Tibial artery (tissue), 4 donors: ENCODE measurements at regions of chr10 and their contacts with region 1.

Region 1: DNA sequence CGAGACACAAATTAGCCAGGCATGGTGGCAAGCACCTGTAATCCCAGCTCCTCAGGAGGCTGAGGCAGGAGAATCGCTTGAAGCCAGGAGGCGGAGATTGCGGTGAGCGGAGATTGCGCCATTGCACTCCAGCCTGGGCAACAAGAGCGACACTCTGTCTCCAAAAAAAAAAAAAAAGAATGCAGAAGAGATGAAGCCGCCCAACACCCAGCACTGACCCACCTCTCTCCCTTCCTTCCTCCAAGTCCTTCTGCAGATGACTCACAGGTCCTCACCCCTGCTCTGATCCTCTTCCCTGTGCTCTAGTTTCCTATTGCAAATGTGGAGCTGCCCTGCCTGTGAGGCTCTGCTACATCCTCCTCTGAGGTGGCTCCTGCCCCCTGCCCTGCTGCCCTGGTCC is 22.0 kb upstream of the OPALIN start:
- DNase-seq: no peak
- H3K4me3 ChIP-seq: no peak overlapping the region
- H3K27ac ChIP-seq: no peak overlapping the region
- H3K4me1 ChIP-seq: no peaks in the 10 kb centered on the region
- H3K27me3 ChIP-seq: peaks cover 0 to 40% of the 10 kb centered on the region in 2 donors
- CTCF ChIP-seq: no peak

Region 2: GRCh38 chr10:96541921-96542320 is 161.1 kb after region 1 on chr10:
- intact Hi-C with region 1: no loop called
- DNase-seq: no peak
- H3K4me3 ChIP-seq: no peak overlapping the region
- H3K27ac ChIP-seq: no peak overlapping the region
- H3K4me1 ChIP-seq: no peaks in the 10 kb centered on the region
- H3K27me3 ChIP-seq: no peaks in the 10 kb centered on the region
- CTCF ChIP-seq: no peak

Region 3: DNA sequence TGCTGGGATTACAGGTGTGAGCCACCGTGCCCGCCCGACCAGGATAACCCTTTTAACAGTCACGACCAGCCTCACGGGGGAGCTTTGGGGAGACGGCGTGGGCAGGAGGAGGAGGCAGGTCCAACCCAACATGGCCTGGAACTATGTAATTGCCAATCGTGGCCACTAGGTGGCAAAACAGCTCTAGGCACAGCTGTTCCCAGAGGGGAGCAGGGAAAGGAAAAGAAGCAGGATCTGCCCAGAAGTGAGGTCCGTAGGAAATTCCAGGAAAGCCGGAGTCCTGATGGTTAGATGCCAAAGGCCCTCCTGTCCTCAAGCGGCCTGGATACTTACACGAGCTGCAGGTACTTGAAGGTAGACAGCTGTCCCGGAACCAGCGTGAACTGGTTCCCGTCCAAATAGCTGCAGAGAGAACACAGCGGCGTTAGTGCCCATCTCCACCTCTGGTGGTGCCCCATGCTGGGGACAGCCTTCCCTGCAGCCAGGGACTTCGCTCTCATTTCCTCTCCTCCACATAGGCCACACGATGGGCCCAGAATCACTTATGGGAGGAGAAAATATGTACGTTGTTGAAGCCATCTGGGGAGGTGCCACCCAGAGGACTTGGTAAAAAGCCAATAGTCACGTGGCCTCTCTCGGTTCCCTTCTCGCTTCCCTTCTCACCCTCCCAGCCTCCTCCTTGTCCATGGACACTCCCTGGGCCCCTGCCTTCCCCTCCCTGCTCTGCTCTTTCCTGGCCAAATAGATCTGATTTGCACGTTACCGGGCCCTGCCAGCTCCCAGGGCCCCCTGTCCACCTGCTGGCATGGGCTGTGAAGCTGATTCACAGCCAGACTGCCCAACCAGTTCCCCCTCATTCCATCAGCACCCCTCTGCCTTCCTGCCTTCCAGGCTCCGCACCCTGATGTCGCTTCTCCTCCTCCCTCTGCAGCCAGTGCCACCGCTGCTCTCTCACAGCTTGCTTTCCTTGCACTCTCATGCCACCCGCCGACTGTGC is 656.8 kb after region 1 on chr10:
- intact Hi-C with region 1: loop called (anchors 10 kb)
- DNase-seq: peak; percentile 78 to 85
- H3K4me3 ChIP-seq: peak overlapping the region; percentile 43 to 61
- H3K27ac ChIP-seq: peak overlapping the region in 1 of 2 donors; percentile 42
- H3K4me1 ChIP-seq: peaks cover 0 to 11% (median 3%) of the 10 kb centered on the region in 4 donors
- H3K27me3 ChIP-seq: peaks cover 0 to 11% of the 10 kb centered on the region in 2 donors
- CTCF ChIP-seq: peak; percentile 80 to 84